ENCODE measurements at regions of chrX and their contacts with region 1.

Region 1: DNA sequence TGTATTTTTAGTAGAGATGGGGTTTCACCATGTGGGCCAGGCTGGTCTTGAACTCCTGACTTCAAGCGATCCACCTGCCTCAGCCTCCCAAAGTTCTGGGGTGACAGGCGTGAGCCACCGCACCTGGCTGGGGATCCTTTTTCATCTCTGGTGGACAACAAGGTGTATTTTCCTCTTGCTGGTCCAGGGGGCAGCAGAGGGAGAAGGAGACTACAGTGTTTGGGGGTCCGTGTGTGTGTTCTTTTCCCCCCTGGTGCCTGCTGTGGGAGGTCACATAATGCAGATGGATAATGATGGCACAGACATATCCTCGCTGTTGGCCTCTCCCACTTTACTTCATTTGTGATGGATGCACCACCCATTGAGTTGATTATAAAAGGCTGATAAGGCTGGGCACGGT is 39.0 kb upstream of the CD99 start:
- DNase-seq: no peak
- ATAC-seq: no peak
- H3K4me3 ChIP-seq: no peak overlapping the region
- H3K27ac ChIP-seq: no peak overlapping the region
- H3K4me1 ChIP-seq: peaks cover 0 to 33% (median 8%) of the 10 kb centered on the region in 4 donors
- H3K27me3 ChIP-seq: no peaks in the 10 kb centered on the region
- CTCF ChIP-seq: peak in 2 of 4 donors; percentile 9 to 24
- POLR2A ChIP-seq: no peak

Region 2: DNA sequence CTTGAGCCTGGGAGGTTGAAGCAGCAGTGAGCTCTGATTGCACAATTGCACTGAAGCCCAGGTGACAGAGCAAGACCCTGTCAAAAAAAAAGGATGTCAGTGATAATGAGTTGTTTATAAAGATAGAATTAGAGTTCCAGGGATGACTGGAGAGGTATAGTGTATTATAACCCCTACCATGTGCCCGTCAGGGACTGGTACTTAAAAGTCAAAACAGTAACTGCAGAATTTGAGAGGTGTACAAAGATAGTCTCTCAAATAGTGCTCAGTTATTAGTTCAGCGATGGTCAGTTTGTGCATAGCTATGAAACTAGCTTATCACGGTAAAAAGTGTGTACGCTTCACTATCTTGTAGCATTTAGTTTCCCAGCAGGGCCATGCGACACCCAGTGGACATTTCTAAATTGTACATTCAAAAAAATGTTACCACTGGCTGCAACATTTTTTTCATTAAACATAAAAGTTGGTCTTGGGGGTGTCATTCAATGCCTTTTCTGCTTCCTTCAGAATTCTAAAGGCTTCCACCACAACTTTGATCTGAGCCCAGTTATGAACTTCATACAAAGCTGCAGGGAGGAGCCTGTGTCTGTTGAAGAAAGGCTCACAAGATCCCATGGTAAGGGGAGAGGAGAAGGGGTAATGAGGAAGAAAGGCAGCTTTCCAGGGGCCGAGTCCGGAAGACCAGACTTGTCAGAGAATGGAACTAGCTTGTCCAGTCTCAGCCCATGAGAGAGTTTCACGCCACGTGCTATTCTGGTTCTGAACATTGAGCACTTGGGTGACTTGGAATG is 167.4 kb after region 1 on chrX:
- intact Hi-C with region 1: loop called in 1 of 2 experiments (anchors 10 kb)
- DNase-seq: no peak
- ATAC-seq: peak; percentile 46 to 58 (median 56)
- H3K4me3 ChIP-seq: no peak overlapping the region
- H3K27ac ChIP-seq: no peak overlapping the region
- H3K4me1 ChIP-seq: peaks cover 0 to 8% (median 2%) of the 10 kb centered on the region in 4 donors
- H3K27me3 ChIP-seq: no peaks in the 10 kb centered on the region
- CTCF ChIP-seq: peak; percentile 58 to 61 (median 59)
- POLR2A ChIP-seq: no peak